Aorta (tissue), 5 donors: ENCODE measurements at regions of chr15 and their contacts with region 1.

Region 1: GRCh38 chr15:99059010-99059981 is 45.6 kb upstream of the SYNM start:
- DNase-seq: peak; percentile 89 to 95
- ATAC-seq: peak; percentile 94
- H3K4me3 ChIP-seq: peak overlapping the region; percentile 63 to 77
- H3K27ac ChIP-seq: peak overlapping the region; percentile 52 to 58
- H3K4me1 ChIP-seq: no peaks in the 10 kb centered on the region
- H3K27me3 ChIP-seq: no peaks in the 10 kb centered on the region

Region 2: GRCh38 chr15:98518823-98519561 is 540.3 kb before region 1 on chr15:
- intact Hi-C with region 1: loop called (anchors 5 kb)
- DNase-seq: peak; percentile 61 to 75
- ATAC-seq: peak; percentile 90
- H3K4me3 ChIP-seq: no peak overlapping the region
- H3K27ac ChIP-seq: no peak overlapping the region
- H3K4me1 ChIP-seq: no peaks in the 10 kb centered on the region
- H3K27me3 ChIP-seq: no peaks in the 10 kb centered on the region

Region 3: GRCh38 chr15:98779463-98780071 is 279.7 kb before region 1 on chr15:
- intact Hi-C with region 1: loop called in 1 of 2 experiments (anchors 10 kb)
- DNase-seq: peak; percentile 84 to 94
- ATAC-seq: peak; percentile 90
- H3K4me3 ChIP-seq: no peak overlapping the region
- H3K27ac ChIP-seq: peak overlapping the region in 1 of 2 donors; percentile 17
- H3K4me1 ChIP-seq: peaks cover 0 to 5% of the 10 kb centered on the region in 2 donors
- H3K27me3 ChIP-seq: no peaks in the 10 kb centered on the region

Region 4: GRCh38 chr15:98914626-98915025 is 144.7 kb before region 1 on chr15:
- intact Hi-C with region 1: loop called in 1 of 2 experiments (anchors 5 kb)
- DNase-seq: no peak
- ATAC-seq: peak; percentile 62
- H3K4me3 ChIP-seq: no peak overlapping the region
- H3K27ac ChIP-seq: peak overlapping the region in 1 of 2 donors; percentile 91
- H3K4me1 ChIP-seq: peaks cover 4 to 5% of the 10 kb centered on the region in 2 donors
- H3K27me3 ChIP-seq: no peaks in the 10 kb centered on the region

Region 5: GRCh38 chr15:98954411-98954810 is 104.9 kb before region 1 on chr15:
- intact Hi-C with region 1: loop called (anchors 2 to 5 kb)
- DNase-seq: peak; percentile 92 to 96
- ATAC-seq: peak; percentile 77
- H3K4me3 ChIP-seq: no peak overlapping the region
- H3K27ac ChIP-seq: peak overlapping the region in 1 of 2 donors; percentile 92
- H3K4me1 ChIP-seq: peaks cover 0 to 2% of the 10 kb centered on the region in 2 donors
- H3K27me3 ChIP-seq: no peaks in the 10 kb centered on the region